ENCODE measurements at regions of chr15 and their contacts with region 1.

Region 1: DNA sequence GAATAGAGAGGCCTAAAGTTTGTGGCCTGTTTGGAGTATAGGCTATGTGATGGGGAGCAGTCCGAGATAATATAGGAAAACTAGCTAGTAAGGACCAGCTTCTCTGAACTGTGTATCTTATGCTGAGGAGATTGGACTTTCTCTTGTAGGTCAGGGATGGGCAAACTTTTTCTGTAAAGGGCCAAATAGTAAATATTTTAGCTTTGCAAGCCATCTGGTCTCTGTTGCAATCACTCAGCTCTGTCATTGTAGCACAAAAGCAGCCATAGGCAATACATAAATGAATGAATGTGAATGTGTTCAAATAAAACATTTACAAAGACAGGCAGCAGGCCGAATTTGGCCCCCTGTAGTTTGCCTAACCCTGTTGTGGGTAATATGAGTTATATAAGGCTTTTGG is 24.5 kb downstream of the TMOD3 start:
- DNase-seq: no peak
- H3K4me3 ChIP-seq: no peak overlapping the region
- H3K27ac ChIP-seq: no peak overlapping the region
- H3K4me1 ChIP-seq: no peaks in the 10 kb centered on the region
- CTCF ChIP-seq: no peak

Region 2: GRCh38 chr15:51874751-51875528 is 20.9 kb after region 1 on chr15:
- CTCF ChIA-PET with region 1: no interaction called
- POLR2A ChIA-PET with region 1: interaction called, 10 read pairs
- intact Hi-C with region 1: no loop called
- DNase-seq: no peak
- H3K4me3 ChIP-seq: no peak overlapping the region
- H3K27ac ChIP-seq: no peak overlapping the region
- H3K4me1 ChIP-seq: no peaks in the 10 kb centered on the region
- CTCF ChIP-seq: no peak

Measured in OCI-LY7 (cell line).